GM10248 (cell line): ENCODE measurements at regions of chr2 and their contacts with region 1.

Region 1: GRCh38 chr2:38158378-38159118 is 82.6 kb upstream of the CYP1B1 start:
- DNase-seq: no peak
- CTCF ChIP-seq: no peak

Region 2: DNA sequence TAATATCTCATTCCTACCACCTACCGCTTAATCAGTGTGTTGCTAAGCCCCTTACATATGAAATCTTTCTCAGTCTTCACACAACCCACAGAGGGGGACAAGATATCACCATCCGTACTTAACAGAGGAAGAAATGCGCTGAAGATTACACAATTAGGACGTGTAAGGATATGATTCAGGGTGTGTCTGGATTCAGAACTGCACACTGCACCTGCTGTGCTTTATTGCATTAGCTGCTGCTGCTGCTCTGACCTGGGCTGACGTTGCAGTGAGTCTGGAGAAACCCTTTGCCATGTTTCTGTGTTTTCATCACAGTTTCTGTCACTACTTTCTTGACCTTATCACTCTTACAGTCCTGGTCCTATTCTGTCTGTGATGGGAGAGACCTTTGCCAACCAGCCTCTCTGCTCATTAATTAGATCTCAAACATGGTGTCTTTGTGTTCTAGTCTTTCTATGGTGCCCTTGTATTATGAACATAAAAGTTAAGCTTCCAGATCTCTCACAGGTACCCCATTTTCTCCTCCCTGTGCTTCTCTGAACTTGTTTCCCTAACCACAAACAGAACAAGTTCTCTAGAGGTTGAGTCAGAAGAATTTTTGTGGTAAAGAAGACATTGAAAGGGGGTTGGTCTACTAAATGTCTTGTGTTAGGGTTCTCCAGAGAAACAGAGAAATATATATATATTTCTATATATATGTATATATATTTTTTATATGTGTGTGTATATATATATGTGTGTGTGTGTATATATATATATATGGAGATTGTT is 10.3 kb after region 1 on chr2:
- CTCF ChIA-PET with region 1: interaction called, 15 read pairs
- POLR2A ChIA-PET with region 1: no interaction called
- DNase-seq: no peak
- CTCF ChIP-seq: no peak

Region 3: DNA sequence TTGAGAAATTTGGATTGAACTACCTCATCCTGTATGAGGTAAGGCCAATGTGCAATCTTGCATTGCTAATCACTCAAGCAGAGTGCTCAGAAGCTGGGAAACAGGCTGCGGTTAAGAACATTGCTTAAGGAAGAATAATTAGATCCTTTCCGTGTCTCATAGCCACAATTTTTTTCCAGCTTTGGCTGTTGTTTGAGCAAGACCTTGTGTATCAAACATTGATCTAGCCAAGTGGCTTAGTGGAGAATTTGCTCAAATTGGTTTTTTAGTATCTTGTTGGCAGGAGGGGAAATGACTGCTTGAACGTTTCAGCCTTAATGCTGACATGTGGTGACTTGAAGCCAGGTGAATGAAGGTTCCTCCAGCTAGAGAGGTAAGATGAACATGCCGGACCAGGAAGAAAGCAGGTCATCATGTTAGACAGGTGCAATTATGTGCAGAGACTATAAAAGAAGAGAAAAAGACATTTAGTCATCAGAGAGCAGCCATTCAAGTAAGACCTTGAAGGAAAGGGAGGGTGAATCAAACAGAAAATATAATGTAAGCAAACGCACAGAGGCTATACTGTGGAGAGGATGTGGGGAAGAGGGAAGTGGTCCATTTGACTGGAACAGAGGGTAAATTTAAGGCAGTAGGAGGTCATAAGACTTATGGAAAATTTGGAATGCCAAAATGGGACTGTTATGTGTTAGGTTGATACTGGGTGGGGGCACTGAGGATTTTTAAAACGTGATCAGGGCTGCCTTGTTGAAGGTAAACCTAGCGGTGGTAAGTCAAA is 16.3 kb after region 1 on chr2:
- CTCF ChIA-PET with region 1: interaction called, 10 read pairs
- POLR2A ChIA-PET with region 1: no interaction called
- DNase-seq: no peak
- CTCF ChIP-seq: no peak

Region 4: DNA sequence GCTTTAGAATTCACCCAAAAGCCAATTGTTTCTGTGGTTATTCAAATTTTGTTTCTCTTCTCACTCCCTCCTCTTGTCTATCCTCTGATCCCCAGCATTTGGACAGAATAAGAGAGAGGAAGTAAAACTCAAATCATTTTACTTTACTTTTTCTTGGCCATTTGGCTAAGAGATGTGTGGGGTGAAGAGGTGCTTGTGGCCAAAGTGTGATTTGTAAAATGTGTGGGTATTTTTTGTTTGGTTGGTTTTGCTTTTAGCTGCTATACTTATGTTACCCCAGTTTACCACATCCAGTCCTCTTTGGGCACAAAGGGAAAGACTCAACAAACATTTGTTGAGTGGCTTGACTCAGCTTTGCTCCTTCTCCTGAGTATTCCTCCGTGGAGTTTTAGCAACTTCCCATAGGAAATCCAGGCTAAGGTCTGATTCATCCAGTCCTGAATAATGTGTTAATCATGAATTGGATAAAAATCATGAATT is 26.5 kb after region 1 on chr2:
- CTCF ChIA-PET with region 1: no interaction called
- POLR2A ChIA-PET with region 1: no interaction called
- DNase-seq: peak; percentile 60
- CTCF ChIP-seq: no peak